ENCODE measurements at regions of chr11 and their contacts with region 1.

Region 1: DNA sequence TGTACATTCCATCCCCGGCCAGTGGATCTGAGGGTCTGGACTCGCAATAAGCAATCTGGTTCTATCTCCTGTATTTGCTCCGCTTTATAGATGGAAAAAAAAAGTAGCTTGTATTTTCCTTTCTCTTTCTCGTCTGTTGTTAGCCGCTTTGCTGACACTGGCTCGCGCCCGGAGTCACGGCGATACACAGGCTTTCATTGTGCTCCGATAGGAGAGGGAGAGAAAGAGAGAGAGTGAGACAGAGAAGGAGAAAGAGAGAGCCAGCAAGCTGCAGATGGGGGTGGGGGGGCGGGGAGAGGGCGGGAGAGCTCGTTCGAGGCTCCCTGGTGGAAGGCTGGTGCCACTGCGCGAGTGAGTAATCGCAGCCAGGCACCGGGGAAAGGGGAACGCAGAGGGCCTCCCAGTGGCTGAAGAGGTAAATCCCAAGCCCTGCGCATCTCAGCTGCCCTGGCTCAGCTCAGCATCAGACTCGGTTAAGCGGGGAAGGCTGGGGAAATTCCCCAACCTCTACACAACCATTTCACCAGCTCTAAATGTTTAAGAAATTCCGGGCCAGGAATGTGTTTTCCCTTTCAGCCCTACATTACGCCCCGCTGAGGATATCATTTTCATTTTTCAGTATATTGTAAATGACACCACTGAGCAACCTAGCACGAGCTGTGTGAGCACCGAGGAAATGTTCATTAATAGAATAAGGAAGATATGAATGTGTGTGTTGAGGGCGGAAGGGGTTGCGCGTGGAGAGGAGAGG is at the start of gene MAML2:
- DNase-seq: peak; percentile 96 to 97
- H3K4me3 ChIP-seq: peak within 1 kb of the TSS; percentile 66
- H3K4me3 Mint-ChIP-seq: peak within 1 kb of the TSS; percentile 93
- H3K27ac Mint-ChIP-seq: peak within 1 kb of the TSS; percentile 68
- H3K4me1 ChIP-seq: peaks cover 19% of the 10 kb centered on the region
- H3K4me1 Mint-ChIP-seq: peaks cover 24% of the 10 kb centered on the region
- H3K27me3 ChIP-seq: no peaks in the 10 kb centered on the region
- H3K27me3 Mint-ChIP-seq: no peaks in the 10 kb centered on the region
- CTCF ChIP-seq: peak; percentile 99
- total RNA-seq, gene MAML2: 11.5 and 12.2 TPM in 2 replicates

Region 2: DNA sequence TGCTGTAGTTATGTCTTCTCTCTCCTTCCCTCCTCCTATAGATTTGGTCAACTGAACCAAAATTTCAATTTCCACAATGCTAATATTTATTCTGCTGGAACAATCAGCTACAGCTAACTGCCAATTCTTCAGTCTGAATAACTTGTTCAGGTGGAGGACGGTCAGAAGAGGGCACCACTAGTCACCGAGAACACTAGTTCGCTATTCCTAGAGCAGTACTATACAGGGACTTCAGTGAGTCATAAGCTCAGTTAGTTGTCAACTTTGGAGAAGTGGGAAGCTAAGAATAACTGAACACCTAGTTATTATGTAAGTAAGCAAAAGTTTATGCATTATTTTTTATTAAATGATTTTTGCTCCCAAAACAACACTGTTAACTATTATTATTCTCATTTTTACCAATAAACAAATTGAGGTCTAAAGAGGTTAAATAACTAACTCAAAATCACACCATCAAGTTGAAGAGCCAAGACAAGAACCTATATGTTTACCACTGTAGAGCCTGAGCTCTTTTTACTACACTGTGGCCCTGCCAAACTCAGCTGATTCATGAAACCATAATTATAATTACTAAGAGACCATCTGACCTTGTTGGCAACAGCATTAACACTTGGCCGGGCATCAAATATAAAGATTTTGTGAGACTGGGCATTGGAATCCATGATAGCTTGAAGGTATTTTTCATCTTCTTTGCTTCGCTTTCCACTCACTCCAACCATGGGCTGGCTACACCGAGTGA is 493.9 kb before region 1 on chr11:
- CTCF ChIA-PET with region 1: interaction called, 119 read pairs
- POLR2A ChIA-PET with region 1: interaction called, 4 read pairs
- intact Hi-C with region 1: loop called (anchors 1 kb)
- DNase-seq: peak; percentile 75 to 81
- H3K4me3 ChIP-seq: no peak overlapping the region
- H3K4me3 Mint-ChIP-seq: no peak overlapping the region
- H3K27ac Mint-ChIP-seq: no peak overlapping the region
- H3K4me1 ChIP-seq: no peaks in the 10 kb centered on the region
- H3K4me1 Mint-ChIP-seq: no peaks in the 10 kb centered on the region
- H3K27me3 ChIP-seq: no peaks in the 10 kb centered on the region
- H3K27me3 Mint-ChIP-seq: no peaks in the 10 kb centered on the region
- CTCF ChIP-seq: peak; percentile 71 to 85

Region 3: GRCh38 chr11:96054870-96055705 is 288.0 kb before region 1 on chr11:
- CTCF ChIA-PET with region 1: interaction called, 74 read pairs
- POLR2A ChIA-PET with region 1: no interaction called
- intact Hi-C with region 1: loop called (anchors 1 kb)
- DNase-seq: peak in 1 of 2 experiments; percentile 48
- H3K4me3 ChIP-seq: no peak overlapping the region
- H3K4me3 Mint-ChIP-seq: no peak overlapping the region
- H3K27ac Mint-ChIP-seq: no peak overlapping the region
- H3K4me1 ChIP-seq: peaks cover 44% of the 10 kb centered on the region
- H3K4me1 Mint-ChIP-seq: peaks cover 43% of the 10 kb centered on the region
- H3K27me3 ChIP-seq: no peaks in the 10 kb centered on the region
- H3K27me3 Mint-ChIP-seq: no peaks in the 10 kb centered on the region
- CTCF ChIP-seq: peak; percentile 77 to 81

Region 4: GRCh38 chr11:96155627-96156378 is 187.3 kb before region 1 on chr11:
- CTCF ChIA-PET with region 1: interaction called, 26 read pairs
- POLR2A ChIA-PET with region 1: no interaction called
- intact Hi-C with region 1: no loop called
- DNase-seq: peak; percentile 79 to 82
- H3K4me3 ChIP-seq: no peak overlapping the region
- H3K4me3 Mint-ChIP-seq: no peak overlapping the region
- H3K27ac Mint-ChIP-seq: peak overlapping the region; percentile 77
- H3K4me1 ChIP-seq: peaks cover 35% of the 10 kb centered on the region
- H3K4me1 Mint-ChIP-seq: peaks cover 17% of the 10 kb centered on the region
- H3K27me3 ChIP-seq: no peaks in the 10 kb centered on the region
- H3K27me3 Mint-ChIP-seq: no peaks in the 10 kb centered on the region
- CTCF ChIP-seq: peak in 1 of 2 experiments; percentile 40

Region 5: DNA sequence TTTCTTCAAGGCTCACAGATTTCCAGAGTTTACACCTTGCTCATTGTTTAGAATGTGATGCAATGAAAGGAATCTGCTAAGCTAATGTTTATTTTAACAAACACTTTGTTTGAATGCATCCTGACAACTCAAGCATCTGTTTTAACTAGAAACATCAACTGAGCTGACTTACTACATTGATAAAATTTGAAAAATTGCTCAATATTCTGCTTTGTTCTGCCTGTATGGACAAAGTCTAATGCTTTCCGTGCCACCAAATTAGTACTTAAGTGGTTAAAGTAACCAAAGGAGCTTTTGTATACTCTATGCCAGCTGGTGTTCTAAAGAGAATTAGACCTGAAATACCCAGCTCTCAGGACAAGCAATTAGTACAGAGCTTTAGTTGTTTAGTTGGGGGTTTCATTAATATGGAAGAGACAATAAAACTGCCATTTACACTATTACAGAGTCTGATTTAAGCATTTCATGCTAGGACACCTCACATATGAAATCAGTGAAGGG is 105.3 kb before region 1 on chr11:
- CTCF ChIA-PET with region 1: interaction called, 58 read pairs
- POLR2A ChIA-PET with region 1: interaction called, 12 read pairs
- intact Hi-C with region 1: loop called (anchors 1 kb)
- DNase-seq: peak in 1 of 2 experiments; percentile 25
- H3K4me3 ChIP-seq: no peak overlapping the region
- H3K4me3 Mint-ChIP-seq: no peak overlapping the region
- H3K27ac Mint-ChIP-seq: no peak overlapping the region
- H3K4me1 ChIP-seq: peaks cover 42% of the 10 kb centered on the region
- H3K4me1 Mint-ChIP-seq: peaks cover 7% of the 10 kb centered on the region
- H3K27me3 ChIP-seq: no peaks in the 10 kb centered on the region
- H3K27me3 Mint-ChIP-seq: no peaks in the 10 kb centered on the region
- CTCF ChIP-seq: no peak

Region 6: DNA sequence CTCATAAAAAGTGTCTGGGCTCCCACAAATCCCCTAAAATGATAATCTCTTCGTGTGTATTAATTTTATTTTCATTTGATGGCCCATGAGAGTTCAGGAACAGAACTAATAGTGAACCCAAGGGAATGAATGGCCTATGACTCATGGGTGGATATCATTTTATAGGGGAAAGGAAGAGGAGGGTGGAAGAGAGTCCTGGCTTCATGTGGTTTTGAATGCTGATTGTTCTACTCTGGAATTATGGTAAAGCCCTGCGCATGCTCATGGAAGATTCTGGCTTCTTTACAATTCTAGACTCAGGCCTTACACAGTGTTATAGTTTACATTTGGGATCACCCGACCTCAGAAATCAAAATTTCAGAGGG is 35.4 kb before region 1 on chr11:
- CTCF ChIA-PET with region 1: interaction called, 10 read pairs
- POLR2A ChIA-PET with region 1: no interaction called
- intact Hi-C with region 1: loop called (anchors 2 kb)
- DNase-seq: no peak
- H3K4me3 ChIP-seq: no peak overlapping the region
- H3K4me3 Mint-ChIP-seq: no peak overlapping the region
- H3K27ac Mint-ChIP-seq: no peak overlapping the region
- H3K4me1 ChIP-seq: peaks cover 22% of the 10 kb centered on the region
- H3K4me1 Mint-ChIP-seq: peaks cover 32% of the 10 kb centered on the region
- H3K27me3 ChIP-seq: no peaks in the 10 kb centered on the region
- H3K27me3 Mint-ChIP-seq: no peaks in the 10 kb centered on the region
- CTCF ChIP-seq: no peak

Region 7: DNA sequence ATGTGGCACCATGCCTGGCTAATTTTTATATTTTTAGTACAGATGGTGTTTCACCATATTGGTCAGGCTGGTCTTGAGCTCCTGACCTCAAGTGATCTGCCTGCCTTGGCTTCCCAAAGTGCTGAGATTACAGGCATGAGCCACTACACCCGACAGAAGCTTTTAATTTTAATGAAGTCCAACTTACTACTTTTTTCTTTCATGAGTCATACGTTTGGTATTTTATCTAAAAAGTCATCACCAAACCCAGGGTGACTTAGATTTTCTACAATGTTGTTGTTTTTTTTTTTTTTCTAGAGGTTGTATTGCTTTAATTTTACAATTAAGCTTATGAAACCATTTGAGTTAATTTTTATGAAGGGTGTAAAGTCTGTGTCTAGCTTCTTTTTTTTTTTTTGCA is 81.6 kb after region 1 on chr11:
- CTCF ChIA-PET with region 1: interaction called, 3 read pairs
- POLR2A ChIA-PET with region 1: no interaction called
- intact Hi-C with region 1: loop called (anchors 1 kb)
- DNase-seq: no peak
- H3K4me3 ChIP-seq: no peak overlapping the region
- H3K4me3 Mint-ChIP-seq: no peak overlapping the region
- H3K27ac Mint-ChIP-seq: no peak overlapping the region
- H3K4me1 ChIP-seq: peaks cover 5% of the 10 kb centered on the region; the same call in 1 of the 2 replicates
- H3K4me1 Mint-ChIP-seq: no peaks in the 10 kb centered on the region
- H3K27me3 ChIP-seq: no peaks in the 10 kb centered on the region; the same call in 1 of the 2 replicates
- H3K27me3 Mint-ChIP-seq: peaks cover 19% of the 10 kb centered on the region
- CTCF ChIP-seq: no peak

Measured in Caco-2 (cell line).